Activated naive CD4-positive, alpha-beta T cell treated with anti-CD3 and anti-CD28 coated beads for 36 hours (primary cell): ENCODE measurements at regions of chr7 and their contacts with region 1.

Region 1: GRCh38 chr7:140230861-140231770 is 54.3 kb upstream of the KDM7A start:
- DNase-seq: peak; percentile 85
- H3K4me3 Mint-ChIP-seq: peak overlapping the region; percentile 97
- H3K27ac Mint-ChIP-seq: peak overlapping the region; percentile 98
- H3K4me1 Mint-ChIP-seq: peaks cover 38% of the 10 kb centered on the region
- H3K27me3 Mint-ChIP-seq: no peaks in the 10 kb centered on the region

Region 2: DNA sequence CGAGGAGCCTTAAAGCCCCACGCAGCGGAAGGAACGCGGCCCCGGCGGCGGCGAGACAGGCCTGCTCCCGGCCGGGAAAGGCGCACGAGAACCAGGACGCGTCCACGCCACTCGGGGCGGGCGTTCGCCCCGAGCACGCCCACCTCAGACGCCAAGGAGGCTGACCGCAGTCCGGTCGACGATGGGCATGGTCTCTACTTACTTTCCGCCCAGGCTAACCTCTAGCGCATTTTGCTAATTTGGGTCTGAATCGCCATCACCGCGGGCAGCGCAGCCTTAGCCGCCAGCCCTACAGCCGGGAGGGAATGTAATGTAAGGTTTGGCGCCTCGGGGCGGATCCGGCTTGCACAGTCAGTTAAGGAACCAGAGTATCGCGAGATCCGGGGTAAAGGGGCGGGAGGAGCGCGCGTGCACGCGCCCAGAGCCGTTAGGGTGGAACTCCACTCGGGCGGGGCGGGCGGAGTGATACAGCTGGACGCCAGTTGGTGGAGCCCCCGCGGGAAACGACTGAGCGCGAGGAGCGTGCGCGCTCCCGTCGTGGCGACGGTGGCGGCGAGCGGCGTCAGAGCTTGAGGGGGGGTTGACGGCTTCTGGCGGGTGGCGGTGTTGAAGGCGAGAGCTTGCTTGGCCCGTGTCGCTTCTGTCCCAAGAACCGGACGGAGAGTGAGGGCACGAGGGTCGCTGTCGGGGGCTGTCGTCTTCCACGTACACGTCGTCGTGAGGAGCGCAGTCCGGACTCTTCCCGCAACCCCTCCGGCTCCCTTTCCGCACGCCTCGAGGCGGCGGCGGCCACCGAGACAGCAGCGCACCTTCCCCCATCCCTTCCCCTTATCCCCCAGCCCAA is 871.5 kb before region 1 on chr7 and contains the start of gene LUC7L2:
- CTCF ChIA-PET with region 1: no interaction called
- intact Hi-C with region 1: loop called (anchors 5 kb)
- DNase-seq: peak; percentile 100
- H3K4me3 Mint-ChIP-seq: peak within 1 kb of the TSS; percentile 93
- H3K27ac Mint-ChIP-seq: peak within 1 kb of the TSS; percentile 98
- H3K4me1 Mint-ChIP-seq: peaks cover 33% of the 10 kb centered on the region
- H3K27me3 Mint-ChIP-seq: no peaks in the 10 kb centered on the region
- total RNA-seq, gene LUC7L2: 132 to 138 TPM

Region 3: GRCh38 chr7:140062528-140063299 is 168.4 kb before region 1 on chr7 and contains the start of gene PARP12:
- CTCF ChIA-PET with region 1: interaction called, 8 read pairs
- intact Hi-C with region 1: loop called (anchors 1 kb)
- DNase-seq: peak; percentile 76
- H3K4me3 Mint-ChIP-seq: peak within 1 kb of the TSS; percentile 81
- H3K27ac Mint-ChIP-seq: no peak within 1 kb of the TSS
- H3K4me1 Mint-ChIP-seq: peaks cover 35% of the 10 kb centered on the region
- H3K27me3 Mint-ChIP-seq: no peaks in the 10 kb centered on the region
- total RNA-seq, gene PARP12: 25.2 to 25.3 TPM

Region 4: GRCh38 chr7:140209866-140210609 is 21.1 kb before region 1 on chr7:
- CTCF ChIA-PET with region 1: interaction called, 6 read pairs
- intact Hi-C with region 1: loop called (anchors 1 kb)
- DNase-seq: peak; percentile 87
- H3K4me3 Mint-ChIP-seq: peak overlapping the region; percentile 51
- H3K27ac Mint-ChIP-seq: peak overlapping the region; percentile 90
- H3K4me1 Mint-ChIP-seq: peaks cover 86% of the 10 kb centered on the region
- H3K27me3 Mint-ChIP-seq: no peaks in the 10 kb centered on the region

Region 5: DNA sequence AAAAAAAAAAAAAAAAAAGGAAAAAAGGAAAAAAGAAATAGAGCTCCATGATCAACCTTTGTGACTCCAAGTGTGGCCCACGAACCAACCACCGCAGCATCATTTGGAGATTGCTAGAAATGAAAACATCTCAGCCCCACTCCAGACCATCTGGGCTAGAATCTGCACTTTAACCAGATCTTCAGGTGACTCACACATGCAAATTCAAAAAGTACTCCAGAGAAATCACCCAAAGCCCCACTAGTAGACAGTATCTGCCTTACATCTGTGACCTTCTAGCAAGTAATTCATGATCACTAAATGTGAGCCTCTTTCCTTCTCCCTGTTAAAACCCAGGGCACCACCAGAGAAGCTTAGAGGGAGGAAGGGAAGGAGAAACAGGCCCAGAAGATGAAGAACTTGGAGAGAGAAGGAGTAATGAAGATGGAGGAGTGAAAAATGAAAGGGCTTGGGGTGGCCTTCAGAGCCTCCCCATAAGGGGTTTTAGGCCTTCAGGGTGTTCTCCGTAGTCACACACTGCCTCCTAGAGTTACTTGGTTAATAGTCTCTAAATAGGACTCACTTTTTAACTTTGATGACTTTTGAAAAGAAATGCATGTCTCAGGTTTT is 73.2 kb after region 1 on chr7:
- CTCF ChIA-PET with region 1: interaction called, 3 read pairs
- intact Hi-C with region 1: loop called (anchors 1 kb)
- DNase-seq: peak; percentile 55
- H3K4me3 Mint-ChIP-seq: no peak overlapping the region
- H3K27ac Mint-ChIP-seq: peak overlapping the region; percentile 90
- H3K4me1 Mint-ChIP-seq: peaks cover 7% of the 10 kb centered on the region
- H3K27me3 Mint-ChIP-seq: no peaks in the 10 kb centered on the region

Region 6: GRCh38 chr7:140403878-140404564 is 172.9 kb after region 1 on chr7 and contains the start of gene RAB19:
- CTCF ChIA-PET with region 1: no interaction called
- intact Hi-C with region 1: loop called (anchors 1 kb)
- DNase-seq: peak; percentile 67
- H3K4me3 Mint-ChIP-seq: peak within 1 kb of the TSS; percentile 82
- H3K27ac Mint-ChIP-seq: peak within 1 kb of the TSS; percentile 86
- H3K4me1 Mint-ChIP-seq: peaks cover 27% of the 10 kb centered on the region
- H3K27me3 Mint-ChIP-seq: no peaks in the 10 kb centered on the region
- total RNA-seq, gene RAB19: 4.6 to 5.2 TPM